ENCODE measurements at regions of chr1 and their contacts with region 1.

Region 1: DNA sequence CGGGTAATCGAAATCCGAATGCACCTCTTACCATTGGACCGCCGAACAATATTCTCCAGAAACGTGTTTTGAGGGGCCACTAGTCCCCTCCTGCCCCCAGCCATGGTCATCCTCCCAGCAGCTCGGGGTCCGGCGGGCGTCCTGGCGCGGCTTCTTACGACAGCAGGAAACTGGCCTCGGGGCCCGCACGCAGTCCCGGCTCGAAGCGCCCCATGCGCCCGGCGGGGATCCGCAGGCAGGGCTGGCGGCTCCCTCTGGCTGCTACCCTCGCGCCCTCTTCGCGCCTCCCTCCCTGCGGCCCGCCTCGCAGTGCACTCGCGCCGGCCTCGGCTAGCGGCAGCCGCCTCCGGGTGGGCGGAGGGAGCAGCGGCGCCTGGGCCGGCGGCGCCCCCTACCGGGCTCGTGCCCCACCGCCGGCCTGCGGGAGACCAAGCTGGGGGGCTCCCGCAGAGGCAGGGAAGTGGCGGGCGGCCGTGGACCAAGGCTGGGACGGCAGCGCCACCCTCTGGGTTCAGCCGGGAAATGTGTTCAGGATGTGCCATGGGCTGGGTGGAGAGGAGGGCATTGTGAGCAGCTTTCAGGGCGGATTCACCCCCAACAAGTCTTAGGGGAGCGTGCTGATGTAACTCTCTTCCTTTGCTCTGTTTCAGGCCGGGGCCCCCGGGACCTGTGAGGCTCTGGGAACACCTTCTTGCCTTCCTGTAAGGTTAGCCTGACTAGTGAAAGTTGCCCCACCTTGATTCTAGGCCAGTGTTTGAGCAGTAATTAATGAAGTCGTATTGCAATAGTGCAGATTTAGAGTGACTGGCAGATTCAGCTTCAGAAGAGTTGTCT is at the start of gene KCNH1:
- DNase-seq: peak; percentile 26
- H3K4me3 ChIP-seq: peak within 1 kb of the TSS; percentile 64
- H3K27me3 ChIP-seq: peaks cover 3% of the 10 kb centered on the region
- CTCF ChIP-seq: peak; percentile 82
- polyA plus RNA-seq, gene KCNH1: 3.5 and 5.8 TPM in 2 replicates

Region 2: DNA sequence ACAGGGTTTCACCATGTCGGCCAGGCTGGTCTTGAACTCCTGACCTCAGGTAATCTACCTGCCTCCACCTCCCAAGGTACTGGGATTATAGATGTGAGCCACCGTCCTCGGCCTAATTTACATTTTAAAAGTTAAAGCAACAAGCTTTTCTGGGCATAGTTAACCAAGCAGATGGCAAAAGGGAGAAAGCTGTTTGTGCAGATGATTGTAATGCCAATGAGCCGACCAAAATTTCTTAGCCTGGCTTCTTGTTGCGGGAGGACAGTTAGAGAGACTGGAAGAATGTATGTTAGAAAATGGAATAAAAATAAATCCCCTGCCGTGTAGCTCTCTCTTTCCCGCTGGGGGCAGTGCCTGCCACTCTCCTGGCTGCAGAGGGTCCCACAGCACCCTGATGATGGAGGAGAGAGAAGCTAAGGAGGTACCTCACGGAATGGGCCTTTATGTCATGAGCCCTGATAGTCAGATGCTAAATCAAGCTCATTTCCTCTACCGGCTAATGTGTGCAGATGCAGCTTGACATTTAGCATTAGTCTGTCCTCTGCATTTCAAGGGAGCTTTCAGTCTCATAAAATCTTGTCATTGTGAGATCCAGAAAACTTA is 718.1 kb before region 1 on chr1:
- CTCF ChIA-PET with region 1: interaction called, 227 read pairs
- POLR2A ChIA-PET with region 1: no interaction called
- DNase-seq: no peak
- H3K4me3 ChIP-seq: no peak overlapping the region
- H3K27me3 ChIP-seq: no peaks in the 10 kb centered on the region
- CTCF ChIP-seq: no peak

Region 3: GRCh38 chr1:210448297-210448892 is 685.7 kb before region 1 on chr1:
- CTCF ChIA-PET with region 1: interaction called, 191 read pairs
- POLR2A ChIA-PET with region 1: no interaction called
- DNase-seq: no peak
- H3K4me3 ChIP-seq: no peak overlapping the region
- H3K27me3 ChIP-seq: no peaks in the 10 kb centered on the region
- CTCF ChIP-seq: peak; percentile 70

Region 4: GRCh38 chr1:210584439-210585113 is 549.5 kb before region 1 on chr1:
- CTCF ChIA-PET with region 1: interaction called, 175 read pairs
- POLR2A ChIA-PET with region 1: no interaction called
- DNase-seq: no peak
- H3K4me3 ChIP-seq: no peak overlapping the region
- H3K27me3 ChIP-seq: no peaks in the 10 kb centered on the region
- CTCF ChIP-seq: peak; percentile 78

Region 5: DNA sequence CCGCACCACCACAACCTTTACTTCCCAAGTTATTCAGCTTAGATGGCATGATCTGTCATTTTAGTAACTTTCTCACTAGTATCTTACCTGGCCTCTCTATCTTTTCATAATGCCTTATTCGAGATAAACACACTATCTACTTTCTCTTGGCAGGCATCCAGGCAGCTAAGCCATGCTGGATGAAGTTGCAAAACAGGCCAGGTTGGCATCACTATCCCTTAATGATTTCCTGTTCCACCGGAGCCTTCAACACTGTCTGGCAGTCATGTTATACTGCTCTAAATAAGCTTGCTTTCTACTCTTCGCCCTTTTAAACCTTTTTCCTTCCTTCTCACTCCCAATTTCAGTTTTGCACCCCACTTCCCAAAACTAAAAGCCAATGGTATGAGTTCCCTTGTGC is 11.9 kb after region 1 on chr1:
- CTCF ChIA-PET with region 1: interaction called, 16 read pairs
- POLR2A ChIA-PET with region 1: no interaction called
- DNase-seq: no peak
- H3K4me3 ChIP-seq: no peak overlapping the region
- H3K27me3 ChIP-seq: no peaks in the 10 kb centered on the region; the same call in 1 of the 2 replicates
- CTCF ChIP-seq: no peak

Region 6: DNA sequence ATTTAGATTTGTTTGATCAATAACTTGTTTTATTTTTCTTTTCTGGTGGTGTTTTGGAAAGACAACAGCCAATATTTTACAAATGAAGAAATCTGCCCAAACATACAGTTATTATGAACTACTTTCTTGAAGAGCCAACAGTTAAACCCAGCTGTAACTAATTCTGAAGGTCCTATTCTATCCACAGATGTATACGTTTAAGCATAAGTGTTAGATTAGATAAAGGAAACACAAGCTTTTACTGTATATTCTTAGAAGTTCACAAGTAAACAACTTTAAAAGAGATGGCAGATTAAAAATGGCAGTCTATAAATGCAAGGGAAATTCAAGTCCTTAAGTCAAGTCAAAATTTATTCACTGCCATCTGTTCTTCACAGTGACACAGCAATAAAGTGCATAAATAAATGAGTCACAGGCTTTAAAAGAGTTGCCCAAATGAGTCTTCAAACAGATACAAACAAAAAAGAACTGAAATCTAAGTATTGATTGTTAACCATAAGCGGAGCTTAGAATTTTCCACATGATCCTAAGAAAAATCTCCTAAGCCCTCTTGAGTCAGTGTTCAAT is 49.8 kb after region 1 on chr1:
- CTCF ChIA-PET with region 1: no interaction called
- POLR2A ChIA-PET with region 1: no interaction called
- DNase-seq: no peak
- H3K4me3 ChIP-seq: no peak overlapping the region
- H3K27me3 ChIP-seq: peaks cover 2% of the 10 kb centered on the region
- CTCF ChIP-seq: no peak

Measured in BJ (cell line).